WTC11 (cell line): ENCODE measurements at regions of chr4 and their contacts with region 1.

Region 1: GRCh38 chr4:109294006-109294405 is 8.5 kb downstream of the COL25A1 start:
- DNase-seq: peak; percentile 53
- ATAC-seq: peak; percentile 96
- H3K4me3 Mint-ChIP-seq: no peak overlapping the region
- H3K27ac Mint-ChIP-seq: no peak overlapping the region
- H3K4me1 Mint-ChIP-seq: peaks cover 3% of the 10 kb centered on the region; the same call in 1 of the 2 replicates
- H3K27me3 Mint-ChIP-seq: no peaks in the 10 kb centered on the region
- CTCF ChIP-seq: peak; percentile 66; the same call in 1 of the 2 replicates

Region 2: DNA sequence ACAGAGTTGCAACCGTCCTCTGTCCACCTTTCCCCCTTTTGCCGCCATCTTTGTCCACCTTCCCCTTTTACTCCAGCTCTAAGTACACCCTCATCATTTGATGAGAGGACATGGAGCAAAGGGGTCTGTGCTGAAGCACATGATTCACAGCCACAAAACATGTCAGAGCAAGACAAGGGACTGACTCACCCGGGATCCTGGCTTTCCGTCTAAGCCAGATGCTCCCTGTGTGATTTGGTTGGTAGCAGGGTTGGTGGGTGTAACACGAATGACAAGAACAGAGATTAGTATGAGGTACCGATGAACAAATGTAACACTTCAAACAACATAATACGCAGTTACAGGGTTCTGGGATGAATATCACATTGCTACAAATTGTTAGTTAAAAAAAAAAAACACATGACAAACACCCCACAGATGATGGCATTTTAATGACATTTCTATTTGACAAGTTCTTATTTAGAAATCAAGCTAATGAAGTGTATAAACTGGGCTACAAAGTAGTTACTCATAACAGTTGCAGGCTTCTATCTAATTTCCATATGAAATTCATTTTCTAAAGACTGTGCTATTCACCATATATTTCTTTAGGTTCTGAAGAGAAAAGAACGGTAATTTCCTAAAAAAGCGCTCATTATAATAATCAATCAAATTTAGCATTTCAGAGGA is 459.7 kb before region 1 on chr4:
- CTCF ChIA-PET with region 1: interaction called, 15 read pairs
- POLR2A ChIA-PET with region 1: no interaction called
- DNase-seq: no peak
- ATAC-seq: no peak
- H3K4me3 Mint-ChIP-seq: no peak overlapping the region
- H3K27ac Mint-ChIP-seq: no peak overlapping the region
- H3K4me1 Mint-ChIP-seq: no peaks in the 10 kb centered on the region
- H3K27me3 Mint-ChIP-seq: no peaks in the 10 kb centered on the region
- CTCF ChIP-seq: no peak

Region 3: DNA sequence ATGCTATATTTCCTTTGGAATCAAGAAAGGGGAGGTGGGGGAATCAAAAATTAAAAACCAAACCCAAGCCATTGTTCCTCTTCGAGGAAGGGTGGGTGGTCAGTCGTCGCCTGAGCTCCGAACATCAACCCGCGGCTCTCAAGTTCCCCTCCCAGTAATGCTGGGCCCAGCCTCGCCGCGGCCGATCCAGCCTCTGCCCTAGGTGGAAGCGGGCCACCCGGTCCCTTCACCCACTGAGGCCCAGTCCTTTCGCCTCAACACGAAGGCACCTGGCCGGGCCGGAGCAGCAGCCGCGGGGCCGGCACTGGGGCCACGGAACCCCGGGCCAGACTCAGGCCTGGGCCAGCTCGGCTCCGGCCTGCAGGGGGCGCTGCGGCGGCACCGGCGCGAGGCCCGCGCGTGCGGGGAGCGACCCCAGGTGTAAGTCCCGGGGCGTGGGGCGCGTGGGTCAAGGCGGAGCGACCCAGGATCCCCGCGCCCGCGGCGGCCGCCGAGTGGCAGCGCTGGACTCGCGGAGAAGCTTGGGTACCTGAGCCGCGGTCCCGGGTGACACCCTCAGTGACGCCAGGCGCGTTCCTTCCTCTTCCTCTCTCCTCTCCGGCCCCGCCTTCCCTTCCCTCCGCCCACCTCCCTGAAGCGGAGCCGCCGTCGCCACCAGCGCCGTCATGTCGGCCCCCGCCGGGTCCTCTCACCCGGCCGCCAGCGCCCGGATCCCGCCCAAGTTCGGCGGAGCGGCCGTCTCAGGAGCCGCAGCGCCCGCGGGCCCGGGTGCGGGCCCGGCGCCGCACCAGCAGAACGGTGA is 139.4 kb after region 1 on chr4 and contains the start of gene SEC24B:
- CTCF ChIA-PET with region 1: no interaction called
- POLR2A ChIA-PET with region 1: no interaction called
- DNase-seq: peak; percentile 88
- ATAC-seq: peak; percentile 88
- H3K4me3 Mint-ChIP-seq: peak within 1 kb of the TSS; percentile 80
- H3K27ac Mint-ChIP-seq: peak within 1 kb of the TSS; percentile 79; the same call in 1 of the 2 replicates
- H3K4me1 Mint-ChIP-seq: peaks cover 45% of the 10 kb centered on the region
- H3K27me3 Mint-ChIP-seq: no peaks in the 10 kb centered on the region
- CTCF ChIP-seq: peak; percentile 96
- total RNA-seq, gene SEC24B: 21.6 to 24.0 TPM (median 22.4 TPM) in 3 replicates

Region 4: DNA sequence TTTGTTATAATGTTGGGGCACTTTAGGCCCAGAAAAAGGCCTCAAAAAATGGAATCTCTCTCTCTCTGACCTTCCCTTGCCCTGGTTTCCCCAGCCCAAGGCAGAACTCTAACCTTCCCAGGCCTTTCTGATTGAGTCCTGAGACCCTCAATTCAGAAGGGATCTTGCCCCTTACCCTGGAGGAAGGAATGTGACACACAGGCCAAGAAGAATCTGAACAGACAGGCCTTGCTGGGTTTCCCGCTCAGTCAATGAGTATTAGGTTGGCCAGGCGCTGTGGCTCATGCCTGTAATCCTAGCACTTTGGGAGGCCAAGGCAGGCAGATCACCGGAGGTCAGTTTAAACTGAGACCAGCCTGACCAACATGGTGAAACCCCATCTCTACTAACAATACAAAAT is 876.9 kb after region 1 on chr4:
- CTCF ChIA-PET with region 1: no interaction called
- POLR2A ChIA-PET with region 1: interaction called, 13 read pairs
- DNase-seq: peak; percentile 17
- ATAC-seq: peak; percentile 83
- H3K4me3 Mint-ChIP-seq: no peak overlapping the region
- H3K27ac Mint-ChIP-seq: peak overlapping the region; percentile 57; the same call in 1 of the 2 replicates
- H3K4me1 Mint-ChIP-seq: peaks cover 10% of the 10 kb centered on the region
- H3K27me3 Mint-ChIP-seq: no peaks in the 10 kb centered on the region
- CTCF ChIP-seq: 0 out of 2 replicates have a peak, but pooled peaks have one; percentile 4